ENCODE measurements at regions of chr16 and their contacts with region 1.

Region 1: GRCh38 chr16:29805378-29806098 is 791 bp upstream of the MAZ start:
- DNase-seq: peak; percentile 98
- H3K4me3 Mint-ChIP-seq: peak overlapping the region; percentile 89
- H3K27ac Mint-ChIP-seq: peak overlapping the region; percentile 99
- H3K4me1 Mint-ChIP-seq: peaks cover 47% of the 10 kb centered on the region
- H3K27me3 Mint-ChIP-seq: no peaks in the 10 kb centered on the region

Region 2: DNA sequence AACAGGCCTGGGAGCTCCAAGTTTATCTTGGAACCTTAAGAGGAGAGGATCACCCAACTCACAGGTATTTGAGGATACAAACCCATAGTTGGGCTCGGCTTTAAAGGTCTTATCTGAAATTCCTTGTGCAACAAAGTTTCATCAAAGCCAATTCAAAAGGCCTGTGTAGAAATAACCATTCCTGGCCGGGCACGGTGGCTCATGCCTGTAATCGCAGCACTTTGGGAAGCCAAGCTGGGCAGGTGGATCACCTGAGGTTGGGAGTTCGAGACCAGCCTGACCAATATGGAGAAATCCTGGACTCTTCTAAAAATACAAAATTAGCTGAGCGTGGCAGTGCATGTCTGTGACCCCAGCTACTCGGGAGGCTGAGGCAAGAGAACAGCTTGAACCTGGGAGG is 88.4 kb before region 1 on chr16:
- CTCF ChIA-PET with region 1: no interaction called
- POLR2A ChIA-PET with region 1: no interaction called
- DNase-seq: no peak
- H3K4me3 Mint-ChIP-seq: no peak overlapping the region
- H3K27ac Mint-ChIP-seq: no peak overlapping the region
- H3K4me1 Mint-ChIP-seq: peaks cover 11% of the 10 kb centered on the region
- H3K27me3 Mint-ChIP-seq: peaks cover 3% of the 10 kb centered on the region

Region 3: GRCh38 chr16:29784901-29785500 is 20.5 kb before region 1 on chr16:
- CTCF ChIA-PET with region 1: interaction called, 25 read pairs
- POLR2A ChIA-PET with region 1: interaction called, 9 read pairs
- DNase-seq: peak; percentile 71
- H3K4me3 Mint-ChIP-seq: no peak overlapping the region
- H3K27ac Mint-ChIP-seq: peak overlapping the region; percentile 80
- H3K4me1 Mint-ChIP-seq: peaks cover 33% of the 10 kb centered on the region
- H3K27me3 Mint-ChIP-seq: peaks cover 5% of the 10 kb centered on the region

Region 4: DNA sequence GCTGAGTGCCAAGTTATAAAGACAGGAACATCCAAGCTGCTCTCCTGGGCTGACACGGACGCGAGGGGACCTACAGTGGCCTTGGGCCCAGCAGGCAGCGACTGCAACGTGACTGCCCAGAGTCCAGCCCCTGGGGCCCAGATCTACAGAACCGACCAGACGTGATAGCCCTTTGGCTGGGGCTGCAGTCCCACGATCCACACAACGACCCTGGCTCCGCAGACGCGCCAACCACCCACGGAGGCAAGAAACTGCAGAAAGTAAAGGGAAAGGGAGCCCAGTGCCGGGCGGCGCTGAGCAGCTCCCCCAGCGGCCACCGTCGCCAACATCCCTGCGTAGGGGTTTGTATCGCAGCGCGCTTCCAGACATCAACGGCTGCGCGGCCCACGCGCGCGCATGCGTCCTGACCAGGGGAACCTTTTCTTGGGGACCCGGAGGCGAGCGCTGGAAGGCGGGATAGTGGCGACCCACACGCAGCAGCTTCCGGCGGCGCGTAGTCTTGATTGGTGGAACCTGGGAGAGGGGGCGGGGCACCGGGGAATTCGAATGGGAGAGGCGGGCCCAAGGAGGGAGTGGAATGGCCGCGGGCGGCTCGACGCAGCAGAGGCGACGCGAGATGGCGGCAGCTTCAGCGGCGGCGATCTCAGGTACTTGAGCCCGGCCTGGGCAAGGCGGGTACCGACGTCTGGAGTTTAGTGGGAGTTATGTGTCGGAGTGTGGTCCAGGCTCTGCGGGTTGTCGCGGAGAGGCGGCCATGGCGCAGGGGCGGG is 15.2 kb before region 1 on chr16 and contains the start of gene KIF22:
- CTCF ChIA-PET with region 1: interaction called, 25 read pairs
- POLR2A ChIA-PET with region 1: interaction called, 9 read pairs
- DNase-seq: peak; percentile 100
- H3K4me3 Mint-ChIP-seq: peak within 1 kb of the TSS; percentile 99
- H3K27ac Mint-ChIP-seq: peak within 1 kb of the TSS; percentile 98
- H3K4me1 Mint-ChIP-seq: peaks cover 50% of the 10 kb centered on the region
- H3K27me3 Mint-ChIP-seq: no peaks in the 10 kb centered on the region
- total RNA-seq, gene KIF22: 244 to 253 TPM

Region 5: GRCh38 chr16:29815793-29816693 is 10.5 kb after region 1 on chr16 and contains the start of gene PAGR1:
- CTCF ChIA-PET with region 1: interaction called, 39 read pairs
- POLR2A ChIA-PET with region 1: interaction called, 9 read pairs
- DNase-seq: peak; percentile 99
- H3K4me3 Mint-ChIP-seq: peak within 1 kb of the TSS; percentile 91
- H3K27ac Mint-ChIP-seq: peak within 1 kb of the TSS; percentile 96
- H3K4me1 Mint-ChIP-seq: peaks cover 71% of the 10 kb centered on the region
- H3K27me3 Mint-ChIP-seq: peaks cover 13% of the 10 kb centered on the region
- total RNA-seq, gene PAGR1: 26.8 to 29.6 TPM

Region 6: DNA sequence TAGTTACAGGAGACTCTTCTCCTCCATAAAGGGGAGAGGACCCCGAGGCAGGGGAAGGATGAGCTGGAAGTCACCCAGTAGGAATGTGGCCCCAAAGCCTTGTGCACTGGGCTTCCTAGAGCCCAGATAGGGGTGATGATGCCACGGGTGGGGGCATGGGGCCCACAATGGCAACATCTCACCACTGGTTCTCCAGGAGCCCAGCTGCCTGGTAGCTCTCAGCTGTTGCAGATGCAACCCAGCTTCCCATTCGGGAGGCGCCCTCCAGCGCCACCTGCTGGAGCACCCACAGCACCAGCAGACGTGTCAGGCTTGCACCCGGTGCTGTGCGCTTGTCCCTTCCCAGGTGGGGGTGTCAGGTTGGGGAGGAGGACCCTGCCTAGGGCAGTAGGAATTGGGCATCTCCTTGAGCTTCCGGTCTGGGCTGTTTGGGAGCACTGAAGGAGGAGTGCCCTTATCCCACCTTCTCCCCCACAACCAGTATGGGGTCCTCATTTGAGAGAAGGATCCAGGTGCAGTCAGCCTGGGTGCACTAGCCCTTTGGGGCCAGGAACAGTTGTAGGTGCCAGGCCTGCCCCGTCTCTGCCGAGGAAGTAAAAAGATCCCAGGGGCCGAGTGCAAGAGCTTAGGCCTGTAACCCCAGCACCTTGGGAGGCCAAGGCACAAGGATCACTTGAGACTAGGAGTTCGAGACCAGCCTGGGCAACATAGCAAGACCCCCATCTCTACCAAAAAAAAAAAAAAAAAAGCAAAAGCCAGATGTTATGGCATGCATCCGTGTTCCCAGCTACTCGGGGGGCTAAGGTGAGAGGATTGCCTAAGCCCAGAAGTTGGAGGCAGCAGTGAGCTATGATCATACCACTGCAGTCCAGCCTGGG is 43.1 kb after region 1 on chr16:
- CTCF ChIA-PET with region 1: interaction called, 14 read pairs
- POLR2A ChIA-PET with region 1: interaction called, 3 read pairs
- DNase-seq: peak; percentile 87
- H3K4me3 Mint-ChIP-seq: no peak overlapping the region
- H3K27ac Mint-ChIP-seq: peak overlapping the region; percentile 19
- H3K4me1 Mint-ChIP-seq: peaks cover 10% of the 10 kb centered on the region
- H3K27me3 Mint-ChIP-seq: no peaks in the 10 kb centered on the region

Region 7: GRCh38 chr16:30715737-30716445 is 910.4 kb after region 1 on chr16:
- CTCF ChIA-PET with region 1: no interaction called
- POLR2A ChIA-PET with region 1: no interaction called
- DNase-seq: peak; percentile 45
- H3K4me3 Mint-ChIP-seq: peak overlapping the region; percentile 28
- H3K27ac Mint-ChIP-seq: peak overlapping the region; percentile 87
- H3K4me1 Mint-ChIP-seq: peaks cover 40% of the 10 kb centered on the region
- H3K27me3 Mint-ChIP-seq: no peaks in the 10 kb centered on the region